Activated CD4-positive, alpha-beta memory T cell treated with anti-CD3 and anti-CD28 coated beads for 36 hours (primary cell): ENCODE measurements at regions of chr4 and their contacts with region 1.

Region 1: DNA sequence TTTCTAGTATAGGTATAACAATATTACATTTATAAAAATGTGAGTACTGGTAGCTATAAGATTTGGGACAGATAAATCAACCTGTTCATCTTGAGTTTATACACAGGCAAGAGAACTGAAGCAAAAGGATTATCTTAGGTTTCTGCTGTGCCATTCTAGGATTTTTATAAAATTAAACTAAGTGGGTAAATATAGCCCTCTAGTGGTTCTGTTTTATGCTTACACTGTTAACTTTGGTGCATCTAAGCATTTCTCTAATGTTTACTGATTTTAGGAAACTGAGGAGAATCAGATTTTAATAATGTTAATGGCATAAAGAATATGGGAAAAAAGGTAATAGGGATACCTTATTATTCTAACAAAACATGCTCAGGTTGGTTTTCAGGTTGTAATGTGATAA is 1.1 kb upstream of the RRH start:
- DNase-seq: no peak
- H3K4me3 Mint-ChIP-seq: no peak overlapping the region
- H3K27ac Mint-ChIP-seq: no peak overlapping the region
- H3K4me1 Mint-ChIP-seq: peaks cover 6% of the 10 kb centered on the region
- H3K27me3 Mint-ChIP-seq: no peaks in the 10 kb centered on the region

Region 2: DNA sequence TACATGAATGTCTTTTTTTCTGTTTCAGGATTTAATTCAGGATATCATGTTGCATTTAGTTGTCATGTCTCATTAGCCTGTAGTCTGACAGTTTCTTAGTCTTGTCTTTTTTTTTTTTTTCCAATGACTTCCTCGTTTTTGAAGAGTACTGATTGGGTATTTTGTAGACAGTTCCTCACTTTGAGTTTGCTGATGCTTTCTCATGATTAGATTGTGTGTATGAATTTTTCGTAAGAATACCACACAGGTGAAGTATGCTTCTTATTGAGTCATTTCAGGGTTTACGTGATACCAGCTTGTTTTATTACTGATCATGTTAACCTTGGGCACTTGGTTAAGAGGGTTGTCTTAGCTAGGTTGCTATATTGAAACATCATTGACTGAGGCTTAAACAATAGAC is 377.9 kb before region 1 on chr4:
- CTCF ChIA-PET with region 1: no interaction called
- POLR2A ChIA-PET with region 1: no interaction called
- intact Hi-C with region 1: no loop called
- DNase-seq: no peak
- H3K4me3 Mint-ChIP-seq: no peak overlapping the region
- H3K27ac Mint-ChIP-seq: no peak overlapping the region
- H3K4me1 Mint-ChIP-seq: peaks cover 44% of the 10 kb centered on the region
- H3K27me3 Mint-ChIP-seq: no peaks in the 10 kb centered on the region

Region 3: GRCh38 chr4:109910256-109910655 is 83.5 kb after region 1 on chr4:
- CTCF ChIA-PET with region 1: no interaction called
- POLR2A ChIA-PET with region 1: no interaction called
- intact Hi-C with region 1: no loop called
- DNase-seq: no peak
- H3K4me3 Mint-ChIP-seq: no peak overlapping the region
- H3K27ac Mint-ChIP-seq: no peak overlapping the region
- H3K4me1 Mint-ChIP-seq: no peaks in the 10 kb centered on the region
- H3K27me3 Mint-ChIP-seq: peaks cover 24% of the 10 kb centered on the region

Region 4: DNA sequence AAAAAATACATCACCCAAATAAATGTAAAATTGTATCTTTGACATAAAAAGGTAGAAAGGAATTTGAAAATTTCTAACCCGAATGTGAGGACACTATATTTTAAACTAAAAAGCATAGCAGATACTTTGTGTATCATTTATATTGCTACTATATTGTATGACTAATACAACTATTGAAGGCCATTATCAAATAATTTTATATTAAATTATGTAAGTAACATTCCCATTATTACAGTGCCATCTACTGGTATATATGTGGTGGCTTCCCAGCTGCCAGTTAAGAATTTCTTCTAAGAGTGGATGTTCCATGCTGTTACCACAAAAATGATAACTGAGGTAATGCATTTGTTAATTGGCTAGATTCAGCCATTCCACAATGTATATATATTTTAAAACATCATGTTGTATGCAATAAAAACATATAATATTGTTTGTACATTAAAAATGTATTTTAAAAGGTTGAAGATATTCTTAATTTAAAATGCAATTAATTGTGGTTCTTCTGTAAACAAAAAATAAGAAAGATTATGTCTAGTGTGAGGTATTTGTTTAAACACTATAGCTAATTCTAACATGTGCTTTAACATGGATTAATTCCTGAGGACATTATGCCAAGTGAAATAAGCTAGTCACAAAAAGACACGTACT is 151.3 kb after region 1 on chr4:
- CTCF ChIA-PET with region 1: interaction called, 10 read pairs
- POLR2A ChIA-PET with region 1: no interaction called
- intact Hi-C with region 1: loop called (anchors 10 kb)
- DNase-seq: no peak
- H3K4me3 Mint-ChIP-seq: no peak overlapping the region
- H3K27ac Mint-ChIP-seq: no peak overlapping the region
- H3K4me1 Mint-ChIP-seq: no peaks in the 10 kb centered on the region
- H3K27me3 Mint-ChIP-seq: peaks cover 9% of the 10 kb centered on the region